ENCODE measurements at regions of chr18 and their contacts with region 1.

Region 1: DNA sequence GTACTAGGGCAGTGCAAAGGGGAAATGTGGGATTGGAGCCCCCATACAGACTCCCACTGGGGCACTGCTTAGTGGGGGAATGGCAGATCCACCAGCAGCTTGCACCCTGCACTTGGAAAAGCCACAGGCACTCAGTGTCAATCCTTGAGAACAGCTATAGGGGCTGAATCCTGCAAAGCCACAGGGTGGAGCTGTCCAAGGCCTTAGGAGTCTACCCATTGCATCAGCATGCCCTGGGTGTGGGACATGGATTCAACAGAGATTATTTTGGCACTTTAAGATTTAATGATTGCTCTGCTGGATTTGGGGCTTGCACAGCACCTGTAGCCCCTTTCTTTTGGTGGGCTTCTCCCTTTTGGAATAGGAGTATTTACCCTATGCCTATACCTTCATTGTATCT is 8.6 kb upstream of the ZNF24 start:
- DNase-seq: no peak
- H3K4me3 ChIP-seq: no peak overlapping the region
- H3K4me3 Mint-ChIP-seq: no peak overlapping the region
- H3K27ac ChIP-seq: no peak overlapping the region
- H3K27ac Mint-ChIP-seq: no peak overlapping the region
- H3K4me1 ChIP-seq: no peaks in the 10 kb centered on the region
- H3K4me1 Mint-ChIP-seq: peaks cover 5% of the 10 kb centered on the region
- H3K27me3 ChIP-seq: no peaks in the 10 kb centered on the region
- H3K27me3 Mint-ChIP-seq: peaks cover 0 to 2% (median 0%) of the 10 kb centered on the region in 3 donors
- CTCF ChIP-seq: no peak

Region 2: DNA sequence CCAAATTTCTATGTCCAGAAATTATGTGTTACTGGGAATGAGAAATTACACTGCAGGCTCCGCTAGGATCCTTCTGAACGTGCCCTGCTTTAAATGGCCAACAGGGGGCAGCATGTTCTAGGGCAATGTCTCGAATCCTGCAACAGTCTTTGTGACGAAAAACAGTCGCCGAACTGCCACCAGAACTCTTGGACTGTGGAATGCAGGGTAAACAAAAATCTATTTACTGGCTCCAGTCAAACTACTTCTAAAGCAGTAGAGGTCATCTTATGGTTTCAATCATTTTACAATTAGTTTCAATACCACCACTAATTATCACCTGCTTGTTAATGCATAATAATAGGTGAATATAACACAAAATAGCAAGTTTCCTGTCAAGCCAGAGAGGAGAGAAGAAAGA is 121.7 kb before region 1 on chr18:
- intact Hi-C with region 1: loop called (anchors 5 kb)
- DNase-seq: peak; percentile 75 to 80 (median 79)
- H3K4me3 ChIP-seq: peak overlapping the region in 1 of 3 experiments; percentile 35
- H3K4me3 Mint-ChIP-seq: peak overlapping the region in 1 of 2 donors; percentile 51
- H3K27ac ChIP-seq: no peak overlapping the region
- H3K27ac Mint-ChIP-seq: peak overlapping the region in 1 of 7 donors; percentile 25
- H3K4me1 ChIP-seq: peaks cover 0 to 4% of the 10 kb centered on the region in 2 donors
- H3K4me1 Mint-ChIP-seq: peaks cover 3% of the 10 kb centered on the region
- H3K27me3 ChIP-seq: no peaks in the 10 kb centered on the region
- H3K27me3 Mint-ChIP-seq: peaks cover 0 to 2% (median 0%) of the 10 kb centered on the region in 3 donors
- CTCF ChIP-seq: peak; percentile 90